Activated naive CD4-positive, alpha-beta T cell treated with anti-CD3 and anti-CD28 coated beads for 36 hours (primary cell): ENCODE measurements at regions of chr20 and their contacts with region 1.

Region 1: DNA sequence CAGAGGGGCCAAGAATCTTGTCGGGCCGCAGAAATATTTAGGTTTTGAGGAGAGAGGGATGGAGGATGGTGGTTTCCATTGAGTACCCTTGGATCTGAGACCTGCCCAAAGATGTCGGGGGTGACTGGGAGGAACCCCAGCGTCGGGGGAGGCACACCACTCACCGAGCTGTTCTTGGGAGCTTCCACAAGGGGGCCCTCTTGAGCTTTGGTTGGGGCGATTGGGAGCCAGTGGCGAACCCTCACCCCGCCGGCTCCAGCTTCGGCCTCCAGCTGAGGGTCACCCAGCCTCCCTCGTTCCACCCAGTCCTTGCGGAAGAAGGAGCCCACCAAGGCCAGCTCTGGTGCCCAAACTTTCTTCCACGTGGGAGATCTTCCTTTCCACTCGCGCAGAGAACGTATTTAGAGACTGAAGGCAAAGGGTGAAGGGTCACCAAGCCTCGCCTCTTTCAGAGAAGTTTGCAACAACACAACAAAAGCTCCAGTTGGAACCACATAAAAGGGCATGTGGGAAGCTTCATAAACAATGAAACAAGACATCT is 33.6 kb downstream of the APCDD1L start:
- DNase-seq: peak; percentile 71
- H3K4me3 Mint-ChIP-seq: no peak overlapping the region
- H3K27ac Mint-ChIP-seq: no peak overlapping the region
- H3K4me1 Mint-ChIP-seq: peaks cover 3% of the 10 kb centered on the region
- H3K27me3 Mint-ChIP-seq: peaks cover 15% of the 10 kb centered on the region

Region 2: DNA sequence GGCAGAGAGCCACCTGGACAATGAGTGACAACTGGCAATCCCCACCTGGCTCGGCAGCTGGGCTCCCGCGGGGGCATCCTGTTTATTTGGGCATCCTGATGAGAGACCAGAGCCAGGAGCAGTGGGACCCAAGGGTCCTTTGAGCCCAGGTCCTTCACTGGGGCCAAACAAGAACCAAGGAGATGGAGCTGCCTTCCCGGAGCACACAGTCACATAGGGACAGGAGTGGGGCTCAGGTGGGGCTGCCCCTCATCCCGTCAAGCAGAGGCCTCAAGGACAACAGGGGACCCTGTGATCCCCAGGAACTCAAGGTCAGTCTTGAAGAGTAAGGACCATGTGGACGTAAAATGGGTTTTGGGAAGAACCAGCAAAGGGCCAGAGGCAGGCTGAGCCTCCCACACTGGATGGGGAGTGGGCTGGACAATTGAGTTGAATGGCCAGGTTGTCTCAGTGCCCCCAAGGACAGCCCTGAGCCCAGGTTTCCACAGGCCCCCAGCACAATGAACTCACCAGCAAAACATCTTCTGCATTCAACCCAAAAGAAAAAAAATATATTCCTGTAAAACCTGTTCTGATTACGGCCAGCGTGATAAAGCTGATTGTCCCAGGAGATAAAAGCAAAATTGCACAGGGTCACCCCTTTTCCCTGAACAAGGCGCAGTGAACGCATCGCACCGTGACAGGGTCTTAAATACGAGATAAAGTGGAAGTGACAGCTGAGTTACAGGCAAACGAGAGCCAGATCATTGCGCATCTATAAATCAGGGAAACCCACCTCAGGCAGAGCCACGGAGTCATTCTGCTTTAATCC is 339.4 kb before region 1 on chr20:
- CTCF ChIA-PET with region 1: no interaction called
- intact Hi-C with region 1: no loop called
- DNase-seq: no peak
- H3K4me3 Mint-ChIP-seq: no peak overlapping the region
- H3K27ac Mint-ChIP-seq: no peak overlapping the region
- H3K4me1 Mint-ChIP-seq: no peaks in the 10 kb centered on the region
- H3K27me3 Mint-ChIP-seq: peaks cover 18% of the 10 kb centered on the region

Region 3: GRCh38 chr20:58500256-58500655 is 18.7 kb after region 1 on chr20:
- CTCF ChIA-PET with region 1: no interaction called
- intact Hi-C with region 1: no loop called
- DNase-seq: no peak
- H3K4me3 Mint-ChIP-seq: no peak overlapping the region
- H3K27ac Mint-ChIP-seq: no peak overlapping the region
- H3K4me1 Mint-ChIP-seq: no peaks in the 10 kb centered on the region
- H3K27me3 Mint-ChIP-seq: no peaks in the 10 kb centered on the region

Region 4: DNA sequence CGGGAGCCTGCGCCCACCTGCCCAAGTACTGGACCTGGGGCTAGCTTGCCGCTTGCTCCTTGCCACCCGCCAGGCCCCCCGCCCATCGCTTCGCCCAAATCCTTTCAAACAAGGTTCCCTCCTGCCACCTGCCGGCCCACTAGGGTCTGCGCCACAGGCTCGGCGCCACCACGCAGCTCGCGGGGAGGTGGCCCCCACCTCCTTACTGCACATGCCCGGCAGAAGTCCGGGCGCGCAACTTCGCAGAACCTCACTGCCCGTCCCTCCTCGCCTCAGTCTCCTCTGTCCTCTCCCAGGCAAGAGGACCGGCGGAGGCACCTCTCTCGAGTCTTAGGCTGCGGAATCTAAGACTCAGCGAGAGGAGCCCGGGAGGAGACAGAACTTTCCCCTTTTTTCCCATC is 357.9 kb after region 1 on chr20:
- CTCF ChIA-PET with region 1: interaction called, 10 read pairs
- intact Hi-C with region 1: loop called (anchors 5 kb)
- DNase-seq: peak; percentile 63
- H3K4me3 Mint-ChIP-seq: peak overlapping the region; percentile 51
- H3K27ac Mint-ChIP-seq: no peak overlapping the region
- H3K4me1 Mint-ChIP-seq: peaks cover 12% of the 10 kb centered on the region
- H3K27me3 Mint-ChIP-seq: peaks cover 44% of the 10 kb centered on the region

Region 5: DNA sequence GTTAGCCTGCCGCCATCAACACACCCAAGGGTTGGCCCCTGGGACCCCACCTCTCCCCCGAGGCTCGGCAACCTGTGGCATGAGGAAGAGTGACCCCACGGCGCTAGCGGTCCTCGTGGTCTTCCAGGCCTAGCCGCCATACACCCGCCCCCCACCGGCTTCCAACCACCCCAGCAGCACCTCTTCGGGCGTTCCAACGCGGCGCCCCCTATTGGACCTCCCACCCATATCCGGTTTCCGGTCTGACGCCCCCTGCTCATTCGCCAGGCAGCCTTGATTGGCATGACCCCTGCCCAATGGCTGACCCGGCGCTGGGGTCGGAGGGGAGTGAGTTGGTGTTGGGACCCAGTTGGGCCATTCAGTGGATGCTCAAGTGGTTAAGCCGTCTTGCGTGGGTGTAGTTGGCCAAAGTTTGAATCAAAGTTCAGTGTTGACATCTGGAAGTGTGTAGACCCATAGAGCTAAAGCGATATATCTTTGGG is 369.2 kb after region 1 on chr20 and contains the start of gene GNAS-AS1:
- CTCF ChIA-PET with region 1: interaction called, 6 read pairs
- intact Hi-C with region 1: loop called (anchors 5 kb)
- DNase-seq: peak; percentile 92
- H3K4me3 Mint-ChIP-seq: peak within 1 kb of the TSS; percentile 81
- H3K27ac Mint-ChIP-seq: no peak within 1 kb of the TSS
- H3K4me1 Mint-ChIP-seq: peaks cover 19% of the 10 kb centered on the region
- H3K27me3 Mint-ChIP-seq: peaks cover 27% of the 10 kb centered on the region
- total RNA-seq, gene GNAS-AS1: 1.6 to 1.9 TPM